ENCODE measurements at regions of chr1 and their contacts with region 1.

Region 1: DNA sequence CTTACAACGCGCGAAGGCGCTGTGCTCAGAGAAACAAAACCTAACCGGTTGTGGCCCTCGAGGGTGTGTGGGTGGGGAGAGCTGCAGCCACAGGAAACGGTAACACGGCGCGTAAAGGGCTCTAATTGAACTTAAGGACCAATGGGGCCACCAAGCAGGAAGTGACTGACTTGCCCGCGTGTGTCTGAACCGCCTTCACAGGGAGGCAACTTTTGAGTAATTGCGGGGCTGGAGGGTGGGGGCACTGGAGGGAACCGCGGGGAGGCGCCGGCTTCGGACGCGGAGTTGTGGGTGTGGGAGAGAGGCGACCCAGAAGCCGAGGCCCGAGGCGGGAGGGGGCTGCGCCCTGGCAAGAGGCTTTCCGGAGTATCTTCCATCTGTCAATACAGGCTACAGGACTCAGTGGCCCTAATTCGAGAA is 577 bp upstream of the PNRC2 start:
- DNase-seq: peak; percentile 97
- ATAC-seq: peak; percentile 82
- H3K4me3 Mint-ChIP-seq: peak overlapping the region; percentile 100
- H3K27ac Mint-ChIP-seq: peak overlapping the region; percentile 100
- H3K4me1 Mint-ChIP-seq: peaks cover 53% of the 10 kb centered on the region
- H3K27me3 Mint-ChIP-seq: no peaks in the 10 kb centered on the region

Region 2: DNA sequence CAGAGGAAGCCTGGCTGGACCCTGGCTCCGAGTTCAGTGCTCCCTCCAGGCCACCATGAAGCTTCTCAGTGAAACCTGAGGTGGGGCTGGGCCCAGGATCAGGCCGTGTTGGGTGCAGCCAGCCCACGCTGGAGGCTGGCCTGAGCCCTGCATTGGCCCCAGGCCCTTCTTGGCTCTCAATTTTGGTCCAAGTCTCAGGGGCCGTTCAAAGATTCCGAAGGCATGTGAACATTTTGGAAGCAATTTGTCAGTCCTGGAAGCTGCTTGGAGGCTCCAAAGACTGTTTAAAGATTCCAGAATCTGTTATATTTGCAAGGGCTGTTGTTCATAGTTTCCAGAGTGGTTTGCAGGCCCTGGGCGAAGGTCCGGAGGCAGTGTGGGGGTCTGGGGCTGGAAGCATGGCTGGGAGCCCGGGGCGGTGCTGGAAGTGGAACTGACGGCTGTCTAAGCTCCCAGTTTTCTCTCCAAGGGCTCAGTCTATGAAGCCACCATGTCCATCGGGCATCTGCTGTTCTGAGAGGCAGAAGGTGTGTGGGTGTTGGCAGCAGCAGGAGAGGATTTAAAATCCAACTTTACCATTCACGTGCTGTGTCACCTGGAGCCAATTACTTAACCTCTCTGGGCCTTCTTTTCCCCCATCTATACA is 1143.5 kb before region 1 on chr1:
- CTCF ChIA-PET with region 1: no interaction called
- POLR2A ChIA-PET with region 1: no interaction called
- intact Hi-C with region 1: no loop called
- DNase-seq: no peak
- ATAC-seq: no peak
- H3K4me3 Mint-ChIP-seq: no peak overlapping the region
- H3K27ac Mint-ChIP-seq: no peak overlapping the region
- H3K4me1 Mint-ChIP-seq: no peaks in the 10 kb centered on the region
- H3K27me3 Mint-ChIP-seq: peaks cover 2% of the 10 kb centered on the region

Region 3: DNA sequence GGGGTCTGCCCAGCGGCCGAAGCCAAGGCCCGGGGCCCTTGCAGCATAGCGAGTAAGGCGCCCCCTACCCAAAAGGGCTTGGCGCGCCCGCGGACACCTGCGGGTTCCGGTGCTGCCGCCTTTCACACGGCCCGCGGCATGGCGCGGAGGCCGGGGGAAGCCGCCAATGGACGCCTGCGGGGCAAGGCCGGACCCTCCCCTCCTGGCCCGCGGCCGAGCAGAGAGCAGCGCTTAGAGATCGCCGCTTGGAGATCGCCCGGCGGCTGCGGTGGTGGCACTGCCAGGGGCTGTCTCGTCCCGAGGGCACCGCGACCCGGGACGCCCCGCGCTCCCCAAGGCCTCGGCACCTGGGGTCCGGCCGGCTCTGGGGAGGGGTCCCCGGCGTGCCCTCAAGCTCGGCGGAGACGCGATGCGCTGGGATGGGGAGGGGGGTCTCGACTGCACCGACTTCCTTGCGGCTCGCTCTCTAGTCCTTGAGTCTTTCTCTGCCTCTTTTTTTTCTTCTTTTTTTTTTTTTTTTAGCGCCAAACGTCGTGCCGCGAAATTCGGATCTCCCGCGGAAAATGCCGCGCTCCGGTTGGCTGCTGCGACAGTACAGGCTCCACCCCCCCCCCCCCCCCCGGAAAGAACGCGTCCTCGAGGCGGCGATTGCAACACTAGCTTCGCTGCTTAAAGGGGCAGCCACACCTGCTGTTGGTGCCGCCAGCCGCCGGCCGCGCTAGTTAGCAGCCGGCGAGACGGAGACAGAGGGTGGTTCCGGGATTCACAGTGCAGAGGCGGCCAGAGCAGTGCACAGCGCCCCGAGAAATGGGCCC is 428.1 kb before region 1 on chr1 and contains the start of gene E2F2:
- CTCF ChIA-PET with region 1: no interaction called
- POLR2A ChIA-PET with region 1: no interaction called
- intact Hi-C with region 1: loop called in 1 of 2 experiments (anchors 1 kb)
- DNase-seq: peak; percentile 91
- ATAC-seq: peak; percentile 81
- H3K4me3 Mint-ChIP-seq: peak within 1 kb of the TSS; percentile 84
- H3K27ac Mint-ChIP-seq: peak within 1 kb of the TSS; percentile 95
- H3K4me1 Mint-ChIP-seq: peaks cover 68% of the 10 kb centered on the region
- H3K27me3 Mint-ChIP-seq: no peaks in the 10 kb centered on the region
- total RNA-seq, gene E2F2: 25.0 to 32.0 TPM

Region 4: GRCh38 chr1:23691499-23692307 is 267.3 kb before region 1 on chr1 and contains the start of gene RPL11:
- CTCF ChIA-PET with region 1: no interaction called
- POLR2A ChIA-PET with region 1: no interaction called
- intact Hi-C with region 1: loop called (anchors 1 to 10 kb)
- DNase-seq: peak; percentile 93
- ATAC-seq: peak; percentile 98
- H3K4me3 Mint-ChIP-seq: peak within 1 kb of the TSS; percentile 97
- H3K27ac Mint-ChIP-seq: peak within 1 kb of the TSS; percentile 98
- H3K4me1 Mint-ChIP-seq: peaks cover 43% of the 10 kb centered on the region
- H3K27me3 Mint-ChIP-seq: peaks cover under 1% of the 10 kb centered on the region
- total RNA-seq, gene RPL11: 1,003 to 1,481 TPM

Region 5: DNA sequence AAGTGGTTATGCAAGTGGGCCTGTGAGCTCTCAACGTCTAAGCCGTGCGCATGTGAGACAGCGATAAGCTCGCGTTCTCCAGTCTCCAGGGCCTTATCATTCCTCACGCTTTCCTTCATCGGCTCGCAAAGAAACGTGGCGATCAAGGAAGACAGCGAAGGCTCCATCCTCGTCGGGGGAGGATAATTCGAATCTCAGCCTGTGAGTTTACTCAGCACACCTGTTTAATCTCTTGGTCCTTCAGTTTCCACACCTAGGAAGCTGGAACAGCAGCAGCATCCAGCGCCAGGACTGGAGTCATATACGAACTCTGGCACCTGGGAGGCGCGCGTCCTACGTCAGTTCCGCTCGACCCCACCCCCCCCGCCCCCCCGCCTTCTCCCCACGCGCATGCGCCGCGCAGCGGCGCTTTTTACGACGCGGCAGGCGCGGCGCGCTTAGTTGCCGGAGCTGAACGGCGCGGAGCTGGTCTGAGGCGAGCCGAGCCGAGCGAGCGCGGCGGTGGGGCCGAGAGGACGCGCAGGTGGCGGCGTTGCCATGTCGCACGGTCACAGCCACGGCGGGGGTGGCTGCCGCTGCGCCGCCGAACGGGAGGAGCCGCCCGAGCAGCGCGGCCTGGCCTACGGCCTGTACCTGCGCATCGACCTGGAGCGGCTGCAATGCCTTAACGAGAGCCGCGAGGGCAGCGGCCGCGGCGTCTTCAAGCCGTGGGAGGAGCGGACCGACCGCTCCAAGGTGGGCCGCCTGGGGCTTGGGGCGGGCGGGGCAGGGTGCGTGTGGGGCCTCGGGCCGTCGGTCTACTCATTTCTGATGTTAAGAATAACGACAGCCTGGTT is 180.9 kb before region 1 on chr1 and contains the start of gene PITHD1:
- CTCF ChIA-PET with region 1: no interaction called
- POLR2A ChIA-PET with region 1: interaction called, 3 read pairs
- intact Hi-C with region 1: loop called in 1 of 2 experiments (anchors 1 kb)
- DNase-seq: peak; percentile 90
- ATAC-seq: peak; percentile 87
- H3K4me3 Mint-ChIP-seq: peak within 1 kb of the TSS; percentile 87
- H3K27ac Mint-ChIP-seq: peak within 1 kb of the TSS; percentile 87
- H3K4me1 Mint-ChIP-seq: peaks cover 43% of the 10 kb centered on the region
- H3K27me3 Mint-ChIP-seq: no peaks in the 10 kb centered on the region
- total RNA-seq, gene PITHD1: 53.1 to 64.1 TPM

Region 6: DNA sequence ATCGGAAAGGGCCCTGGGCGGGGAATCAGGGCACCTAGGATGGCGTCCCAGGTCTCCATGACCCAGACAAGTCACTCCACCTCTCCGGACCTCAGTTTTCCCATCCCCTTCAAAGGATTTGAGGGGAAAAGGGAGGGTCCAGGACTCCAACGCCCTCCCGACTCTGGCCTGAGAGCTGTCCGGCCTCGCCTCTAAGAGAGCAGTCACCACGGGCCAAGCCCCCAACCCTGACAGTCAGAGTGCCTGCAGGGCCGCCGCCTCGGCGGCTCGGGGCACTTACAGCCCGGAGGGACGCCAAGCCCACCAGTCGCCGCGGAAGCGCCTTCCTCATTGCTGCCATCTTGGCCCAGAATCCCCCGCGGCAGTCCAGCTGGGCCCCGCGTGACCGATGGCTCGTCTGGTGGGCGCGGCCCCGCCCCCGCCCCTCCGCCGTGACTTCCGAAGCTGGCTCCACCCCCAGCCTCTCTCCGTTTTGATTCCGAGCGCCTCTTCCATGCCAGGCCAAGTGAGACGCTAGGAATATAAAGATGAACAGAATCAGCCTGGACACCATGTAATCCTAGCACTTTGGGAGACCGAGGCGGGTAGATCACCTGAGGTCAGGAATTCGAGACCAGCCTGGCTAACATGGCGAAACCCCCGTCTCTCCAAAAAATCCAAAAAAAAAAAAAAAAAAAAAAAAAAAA is 133.8 kb before region 1 on chr1 and contains the start of gene HMGCL:
- CTCF ChIA-PET with region 1: no interaction called
- POLR2A ChIA-PET with region 1: interaction called, 5 read pairs
- intact Hi-C with region 1: loop called in 1 of 2 experiments (anchors 1 kb)
- DNase-seq: peak; percentile 95
- ATAC-seq: peak; percentile 94
- H3K4me3 Mint-ChIP-seq: peak within 1 kb of the TSS; percentile 97
- H3K27ac Mint-ChIP-seq: peak within 1 kb of the TSS; percentile 97
- H3K4me1 Mint-ChIP-seq: peaks cover 19% of the 10 kb centered on the region
- H3K27me3 Mint-ChIP-seq: no peaks in the 10 kb centered on the region
- total RNA-seq, gene HMGCL: 31.9 to 46.0 TPM

Region 7: GRCh38 chr1:23875382-23875781 is 83.7 kb before region 1 on chr1:
- CTCF ChIA-PET with region 1: no interaction called
- POLR2A ChIA-PET with region 1: no interaction called
- intact Hi-C with region 1: no loop called
- DNase-seq: no peak
- ATAC-seq: no peak
- H3K4me3 Mint-ChIP-seq: no peak overlapping the region
- H3K27ac Mint-ChIP-seq: no peak overlapping the region
- H3K4me1 Mint-ChIP-seq: no peaks in the 10 kb centered on the region
- H3K27me3 Mint-ChIP-seq: no peaks in the 10 kb centered on the region

Region 8: GRCh38 chr1:23904748-23905357 is 54.2 kb before region 1 on chr1:
- CTCF ChIA-PET with region 1: no interaction called
- POLR2A ChIA-PET with region 1: no interaction called
- intact Hi-C with region 1: loop called in 1 of 2 experiments (anchors 2 kb)
- DNase-seq: peak; percentile 66
- ATAC-seq: peak; percentile 84
- H3K4me3 Mint-ChIP-seq: no peak overlapping the region
- H3K27ac Mint-ChIP-seq: no peak overlapping the region
- H3K4me1 Mint-ChIP-seq: peaks cover 10% of the 10 kb centered on the region
- H3K27me3 Mint-ChIP-seq: peaks cover 51% of the 10 kb centered on the region

Region 9: GRCh38 chr1:24186993-24187805 is 228.1 kb after region 1 on chr1 and contains the start of gene IFNLR1:
- CTCF ChIA-PET with region 1: no interaction called
- POLR2A ChIA-PET with region 1: no interaction called
- intact Hi-C with region 1: loop called in 1 of 2 experiments (anchors 5 kb)
- DNase-seq: peak; percentile 93
- ATAC-seq: peak; percentile 88
- H3K4me3 Mint-ChIP-seq: peak within 1 kb of the TSS; percentile 73
- H3K27ac Mint-ChIP-seq: peak within 1 kb of the TSS; percentile 71
- H3K4me1 Mint-ChIP-seq: peaks cover 47% of the 10 kb centered on the region
- H3K27me3 Mint-ChIP-seq: no peaks in the 10 kb centered on the region
- total RNA-seq, gene IFNLR1: 6.6 to 7.4 TPM

Measured in activated CD4-positive, alpha-beta T cell treated with anti-CD3 and anti-CD28 coated beads for 36 hours (primary cell).